Psoas muscle (tissue), 8 donors: ENCODE measurements at regions of chr3 and their contacts with region 1.

Region 1: DNA sequence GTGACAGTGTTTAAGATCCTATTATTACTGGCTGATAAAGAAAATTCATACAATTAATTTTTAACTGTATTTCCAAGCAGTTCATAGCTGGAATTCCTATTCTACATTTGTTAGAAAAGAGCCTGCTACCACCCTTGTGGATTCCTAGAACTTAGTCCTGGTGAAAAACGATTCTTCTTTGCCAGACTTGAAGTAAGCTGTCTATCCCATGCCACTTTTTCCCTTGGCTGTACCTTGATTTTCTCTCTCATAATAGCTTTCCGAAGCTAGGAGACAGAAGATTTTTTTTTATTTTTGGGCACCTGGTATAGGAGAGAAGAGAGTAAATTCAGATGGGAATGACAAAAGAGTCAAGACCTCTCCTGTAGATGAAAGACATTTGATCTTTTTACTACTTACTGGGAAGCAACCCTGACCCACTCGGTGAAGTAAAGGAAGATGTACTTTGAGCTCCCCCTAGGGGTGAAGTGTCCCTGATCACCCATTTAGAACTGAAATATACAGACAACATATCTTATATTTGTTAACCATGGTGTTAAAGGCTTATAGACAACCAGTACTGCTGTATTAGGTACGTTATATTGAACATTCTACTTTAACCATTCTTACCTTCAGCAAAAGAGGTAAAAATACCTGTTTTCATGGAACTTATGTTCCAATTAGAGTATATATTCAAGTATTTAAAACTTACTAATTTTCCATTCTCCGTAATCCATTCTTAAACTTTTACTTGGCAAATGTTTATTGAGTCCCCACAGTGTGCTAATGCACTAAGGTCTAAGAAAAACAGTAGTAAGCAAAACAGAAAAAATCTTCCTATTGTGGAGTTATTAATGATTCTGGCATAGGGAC is 36.2 kb upstream of the C3orf38 start:
- DNase-seq: no peak
- ATAC-seq: peak; percentile 70 to 96 (median 84)
- H3K4me3 ChIP-seq: no peak overlapping the region
- H3K27ac ChIP-seq: no peak overlapping the region
- H3K4me1 ChIP-seq: no peaks in the 10 kb centered on the region
- H3K27me3 ChIP-seq: no peaks in the 10 kb centered on the region
- CTCF ChIP-seq: peak; percentile 74

Region 2: GRCh38 chr3:87350364-87351199 is 763.0 kb before region 1 on chr3:
- intact Hi-C with region 1: loop called in 1 of 2 experiments (anchors 10 kb)
- DNase-seq: no peak
- ATAC-seq: peak; percentile 52 to 86 (median 76)
- H3K4me3 ChIP-seq: no peak overlapping the region
- H3K27ac ChIP-seq: no peak overlapping the region
- H3K4me1 ChIP-seq: no peaks in the 10 kb centered on the region
- H3K27me3 ChIP-seq: no peaks in the 10 kb centered on the region
- CTCF ChIP-seq: peak; percentile 88

Region 3: DNA sequence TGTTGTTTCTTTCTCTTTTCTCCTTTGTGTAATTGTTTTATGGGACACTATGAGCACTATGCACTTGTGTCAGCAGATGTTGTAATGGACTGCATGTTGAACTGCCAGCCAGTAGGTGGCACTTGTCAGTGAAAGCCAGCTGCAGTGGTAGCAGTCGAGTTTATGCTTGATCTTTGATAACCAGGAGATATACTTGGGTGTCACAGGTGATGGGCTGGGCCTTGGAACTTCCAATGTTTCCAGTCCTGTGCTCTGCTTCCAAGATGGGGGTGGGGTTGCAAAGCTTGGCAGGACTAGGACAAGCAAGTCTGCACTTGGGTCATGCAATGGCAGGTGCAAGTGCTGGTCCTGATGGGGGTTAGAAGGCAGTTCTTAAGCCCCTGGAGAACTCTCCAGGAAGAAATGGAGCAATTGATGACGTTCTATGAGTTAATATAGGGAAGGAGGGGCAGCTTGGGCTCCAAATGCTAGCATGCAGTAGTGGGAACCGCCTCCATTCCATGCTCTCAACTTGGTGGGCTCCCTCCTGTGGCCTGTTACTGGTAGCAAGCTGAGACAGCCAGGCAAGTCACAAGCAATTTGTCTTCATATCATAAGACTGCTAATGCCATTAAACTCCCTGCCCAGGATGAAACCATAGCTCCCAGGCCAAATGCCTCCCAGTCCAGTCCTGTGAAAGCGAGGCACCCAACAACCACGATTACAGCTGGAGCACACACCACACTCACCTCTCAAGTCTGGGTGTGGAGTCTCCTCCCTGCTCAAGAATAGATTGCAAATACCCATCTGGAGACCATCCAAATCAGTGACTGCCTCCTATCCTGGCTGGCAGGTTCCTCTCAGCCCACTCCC is 342.0 kb before region 1 on chr3:
- intact Hi-C with region 1: loop called in 1 of 2 experiments (anchors 10 kb)
- DNase-seq: peak in 1 of 2 donors; percentile 50
- ATAC-seq: peak in 1 of 4 donors; percentile 46
- H3K4me3 ChIP-seq: no peak overlapping the region
- H3K27ac ChIP-seq: no peak overlapping the region
- H3K4me1 ChIP-seq: no peaks in the 10 kb centered on the region
- H3K27me3 ChIP-seq: no peaks in the 10 kb centered on the region
- CTCF ChIP-seq: peak; percentile 42

Region 4: DNA sequence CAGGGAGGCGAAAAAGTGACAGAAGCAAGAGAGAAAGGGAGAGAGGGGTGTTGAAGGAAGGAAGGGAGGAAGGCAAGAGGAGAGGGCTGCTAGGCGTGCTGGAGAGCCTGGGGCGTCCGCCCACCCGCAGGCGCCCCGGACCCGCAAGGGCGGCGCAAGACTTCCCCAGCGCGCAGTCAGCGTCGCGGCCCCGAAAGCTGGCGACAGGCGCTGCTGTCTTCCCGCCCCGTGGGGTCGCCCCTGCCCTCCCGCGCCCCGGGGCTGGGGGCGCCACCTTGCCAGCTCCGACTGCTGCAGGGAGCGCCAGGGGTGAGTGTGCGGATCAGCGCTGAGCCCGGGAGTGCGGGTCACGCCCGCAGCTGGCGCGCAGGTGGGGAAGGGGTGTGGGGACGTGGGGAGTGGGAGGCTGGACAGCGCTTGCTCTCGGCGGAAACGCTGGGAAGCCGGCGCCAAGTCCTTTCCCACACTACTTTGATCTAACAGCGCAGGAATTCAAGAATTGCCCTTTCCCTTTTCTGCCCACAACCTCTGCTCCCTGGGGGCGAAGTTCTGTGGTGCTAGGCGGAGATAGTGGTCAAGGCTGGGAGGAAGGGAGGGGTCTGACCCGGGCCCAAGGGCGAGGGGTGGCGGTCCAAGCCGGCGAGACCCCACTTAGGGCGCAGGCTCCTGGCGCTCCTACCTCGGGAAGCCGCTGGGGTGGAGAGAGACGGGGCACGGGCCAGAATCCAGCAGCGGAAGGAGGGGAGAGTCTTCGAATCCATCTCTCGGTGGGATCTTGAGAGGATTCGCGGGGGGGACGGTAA is 320.8 kb before region 1 on chr3:
- intact Hi-C with region 1: loop called in 1 of 2 experiments (anchors 10 kb)
- DNase-seq: no peak
- ATAC-seq: peak in 1 of 4 donors; percentile 35
- H3K4me3 ChIP-seq: peak within 1 kb of the TSS; percentile 61
- H3K27ac ChIP-seq: no peak within 1 kb of the TSS
- H3K4me1 ChIP-seq: no peaks in the 10 kb centered on the region
- H3K27me3 ChIP-seq: peaks cover 0 to 41% (median 5%) of the 10 kb centered on the region in 3 donors
- CTCF ChIP-seq: no peak

Region 5: GRCh38 chr3:88058591-88059368 is 54.8 kb before region 1 on chr3 and contains the starts of genes CGGBP1 and ZNF654:
- intact Hi-C with region 1: loop called in 1 of 2 experiments (anchors 5 kb)
- DNase-seq: peak; percentile 97 to 98
- ATAC-seq: peak; percentile 94 to 97 (median 96)
- H3K4me3 ChIP-seq: peak within 1 kb of the TSS; percentile 96
- H3K27ac ChIP-seq: peak within 1 kb of the TSS; percentile 97
- H3K4me1 ChIP-seq: peaks cover 40% of the 10 kb centered on the region
- H3K27me3 ChIP-seq: no peaks in the 10 kb centered on the region
- CTCF ChIP-seq: no peak
- total RNA-seq, gene CGGBP1: 39.1 to 46.2 (median 42.9) TPM
- total RNA-seq, gene ZNF654: 8.8 to 10.7 (median 9.6) TPM

Region 6: DNA sequence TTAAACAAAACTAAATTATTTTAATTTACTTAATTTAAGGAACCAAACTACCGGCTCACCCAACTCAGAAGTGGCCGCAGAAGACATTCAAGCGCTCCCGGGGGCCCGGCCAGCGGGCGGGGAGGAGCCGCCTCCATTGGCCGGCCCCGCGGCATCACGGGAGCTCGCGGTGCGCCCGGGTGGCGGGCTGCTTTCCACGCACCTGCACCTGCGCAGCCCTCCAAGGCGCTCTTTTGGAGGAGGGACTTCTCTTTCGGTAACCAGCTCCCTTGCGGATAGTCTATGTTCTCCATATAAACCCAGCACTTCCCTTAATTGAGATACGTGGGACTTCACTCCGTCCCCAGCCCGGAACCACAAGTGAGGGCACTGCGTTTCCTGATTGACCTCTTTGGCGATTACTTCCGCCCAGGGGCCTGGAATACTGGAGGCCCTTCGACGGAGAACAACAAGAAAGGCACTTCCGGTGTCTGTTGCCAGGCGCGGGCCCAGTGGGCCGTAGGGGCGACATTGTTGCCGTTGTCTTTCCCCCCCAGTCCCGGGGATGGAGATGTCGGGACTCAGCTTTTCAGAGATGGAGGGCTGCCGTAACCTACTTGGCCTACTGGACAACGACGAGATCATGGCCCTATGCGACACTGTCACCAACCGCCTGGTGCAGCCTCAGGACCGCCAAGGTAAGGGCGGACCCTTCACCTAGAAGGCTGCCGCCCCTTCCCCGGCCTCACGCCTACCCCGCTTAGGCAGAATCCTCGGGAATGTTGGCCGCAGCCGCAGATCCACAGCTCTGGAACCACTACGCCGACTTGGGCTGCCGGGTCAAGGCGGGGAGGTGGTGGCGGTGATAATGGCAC is 36.2 kb after region 1 on chr3 and contains the start of gene C3orf38:
- intact Hi-C with region 1: no loop called
- DNase-seq: peak; percentile 92 to 93
- ATAC-seq: peak; percentile 97 to 99 (median 99)
- H3K4me3 ChIP-seq: peak within 1 kb of the TSS; percentile 86
- H3K27ac ChIP-seq: peak within 1 kb of the TSS; percentile 92
- H3K4me1 ChIP-seq: peaks cover 13% of the 10 kb centered on the region
- H3K27me3 ChIP-seq: no peaks in the 10 kb centered on the region
- CTCF ChIP-seq: no peak
- total RNA-seq, gene C3orf38: 9.7 to 14.8 (median 11.7) TPM